ENCODE measurements at regions of chr5 and their contacts with region 1.

Region 1: GRCh38 chr5:143435210-143435657 is 31.7 kb upstream of the NR3C1 start:
- DNase-seq: peak; percentile 61
- H3K4me3 Mint-ChIP-seq: peak overlapping the region; percentile 83
- H3K27ac Mint-ChIP-seq: peak overlapping the region; percentile 97
- H3K4me1 Mint-ChIP-seq: peaks cover 68% of the 10 kb centered on the region
- H3K27me3 Mint-ChIP-seq: no peaks in the 10 kb centered on the region

Region 2: GRCh38 chr5:143418140-143418866 is 16.9 kb before region 1 on chr5:
- CTCF ChIA-PET with region 1: interaction called, 4 read pairs
- intact Hi-C with region 1: loop called (anchors 1 kb)
- DNase-seq: no peak
- H3K4me3 Mint-ChIP-seq: no peak overlapping the region
- H3K27ac Mint-ChIP-seq: no peak overlapping the region
- H3K4me1 Mint-ChIP-seq: peaks cover 14% of the 10 kb centered on the region
- H3K27me3 Mint-ChIP-seq: no peaks in the 10 kb centered on the region

Region 3: DNA sequence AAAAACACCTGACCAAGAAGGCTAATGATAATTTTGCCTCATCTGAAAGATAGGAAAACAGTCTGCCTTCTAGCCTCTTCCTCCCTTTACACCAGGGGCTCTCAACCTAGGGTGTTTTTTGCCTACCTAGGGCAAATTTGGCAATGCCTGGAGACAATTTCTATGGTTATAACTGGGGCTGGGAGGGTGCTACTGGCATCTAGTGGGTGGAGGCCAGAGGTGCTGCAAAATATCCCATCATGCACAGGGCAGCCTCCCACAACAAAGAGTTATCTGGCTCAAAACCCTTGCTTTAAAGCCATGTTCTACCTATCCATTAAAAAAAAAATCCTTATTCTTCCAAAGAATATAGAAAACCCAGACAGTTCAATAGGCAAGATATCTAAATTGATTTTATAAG is 13.3 kb after region 1 on chr5:
- CTCF ChIA-PET with region 1: interaction called, 8 read pairs
- intact Hi-C with region 1: loop called (anchors 1 kb)
- DNase-seq: peak; percentile 45
- H3K4me3 Mint-ChIP-seq: no peak overlapping the region
- H3K27ac Mint-ChIP-seq: no peak overlapping the region
- H3K4me1 Mint-ChIP-seq: peaks cover 20% of the 10 kb centered on the region
- H3K27me3 Mint-ChIP-seq: no peaks in the 10 kb centered on the region

Region 4: GRCh38 chr5:143557061-143557818 is 122.0 kb after region 1 on chr5:
- CTCF ChIA-PET with region 1: no interaction called
- intact Hi-C with region 1: loop called (anchors 5 kb)
- DNase-seq: no peak
- H3K4me3 Mint-ChIP-seq: no peak overlapping the region
- H3K27ac Mint-ChIP-seq: no peak overlapping the region
- H3K4me1 Mint-ChIP-seq: peaks cover 6% of the 10 kb centered on the region
- H3K27me3 Mint-ChIP-seq: peaks cover 3% of the 10 kb centered on the region

Region 5: GRCh38 chr5:143605403-143606005 is 170.3 kb after region 1 on chr5:
- CTCF ChIA-PET with region 1: no interaction called
- intact Hi-C with region 1: loop called (anchors 1 kb)
- DNase-seq: peak; percentile 57
- H3K4me3 Mint-ChIP-seq: no peak overlapping the region
- H3K27ac Mint-ChIP-seq: peak overlapping the region; percentile 36
- H3K4me1 Mint-ChIP-seq: peaks cover 20% of the 10 kb centered on the region
- H3K27me3 Mint-ChIP-seq: peaks cover 19% of the 10 kb centered on the region

Region 6: GRCh38 chr5:143679777-143680176 is 244.5 kb after region 1 on chr5:
- CTCF ChIA-PET with region 1: no interaction called
- intact Hi-C with region 1: loop called (anchors 2 kb)
- DNase-seq: no peak
- H3K4me3 Mint-ChIP-seq: no peak overlapping the region
- H3K27ac Mint-ChIP-seq: no peak overlapping the region
- H3K4me1 Mint-ChIP-seq: peaks cover 22% of the 10 kb centered on the region
- H3K27me3 Mint-ChIP-seq: peaks cover 5% of the 10 kb centered on the region